ENCODE measurements at regions of chr15 and their contacts with region 1.

Region 1: DNA sequence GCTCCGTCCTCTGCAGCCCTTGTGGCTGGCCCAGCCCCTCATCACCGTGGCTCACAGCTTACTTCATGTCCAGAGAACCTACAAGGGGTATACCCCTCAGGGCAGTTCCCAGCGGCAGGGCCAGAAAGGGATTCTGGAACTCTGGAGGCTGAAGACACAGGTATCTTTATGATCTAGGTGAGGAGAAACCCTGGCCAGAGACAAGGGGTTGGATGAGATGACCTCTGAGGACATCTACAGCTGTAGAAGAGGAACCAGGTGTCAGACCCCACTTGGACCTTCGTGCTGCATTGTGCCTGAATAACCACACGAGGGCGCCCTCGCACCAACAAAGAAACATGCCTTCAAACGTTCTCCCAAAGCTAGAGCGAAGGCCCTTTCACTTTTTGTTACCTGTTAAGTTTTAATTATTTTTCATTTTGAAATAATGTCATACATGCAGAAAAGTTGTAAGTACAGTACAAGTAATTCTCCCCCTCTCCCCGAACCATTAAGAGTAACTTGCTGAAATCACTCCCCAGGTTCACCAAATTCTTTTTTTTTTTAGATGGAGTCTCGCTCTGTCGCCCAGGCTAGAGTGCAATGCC is 118.7 kb upstream of the SMAD3 start:
- DNase-seq: peak in 1 of 2 donors; percentile 64
- ATAC-seq: peak; percentile 53

Region 2: GRCh38 chr15:67303490-67304363 is 357.1 kb after region 1 on chr15:
- intact Hi-C with region 1: loop called (anchors 5 to 10 kb)
- DNase-seq: peak in 1 of 2 donors; percentile 12
- ATAC-seq: peak; percentile 82

Region 3: DNA sequence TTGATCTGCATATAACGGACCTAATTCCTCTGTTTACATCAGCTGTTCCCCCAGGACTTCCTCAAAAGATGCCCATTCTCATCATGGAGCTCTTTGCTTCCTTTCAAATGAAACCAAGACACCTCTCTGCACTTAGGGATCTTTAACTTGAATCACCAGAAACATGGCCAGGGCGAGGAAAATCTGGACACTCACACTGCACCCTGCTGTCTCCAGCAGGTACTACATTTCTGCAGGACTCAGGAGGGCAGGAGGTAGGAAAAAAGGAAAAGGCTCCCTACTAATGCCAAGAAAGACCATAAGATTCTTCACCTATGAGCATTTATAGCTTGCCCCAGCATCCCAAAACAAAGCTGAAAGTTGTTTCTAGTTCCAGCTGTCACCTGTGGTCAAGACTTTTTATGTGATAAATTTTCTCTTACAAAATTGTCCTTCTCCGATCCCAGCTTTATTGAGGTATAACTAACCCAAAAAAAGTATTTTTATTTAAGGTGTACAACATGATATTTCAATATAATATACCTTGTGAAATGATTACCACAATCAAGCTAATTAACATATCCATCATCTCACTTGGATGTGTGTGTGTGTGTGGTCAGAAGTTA is 486.9 kb after region 1 on chr15:
- intact Hi-C with region 1: loop called in 1 of 2 experiments (anchors 10 kb)
- DNase-seq: peak in 1 of 2 donors; percentile 37
- ATAC-seq: peak; percentile 73